ENCODE measurements at regions of chr10 and their contacts with region 1.

Region 1: DNA sequence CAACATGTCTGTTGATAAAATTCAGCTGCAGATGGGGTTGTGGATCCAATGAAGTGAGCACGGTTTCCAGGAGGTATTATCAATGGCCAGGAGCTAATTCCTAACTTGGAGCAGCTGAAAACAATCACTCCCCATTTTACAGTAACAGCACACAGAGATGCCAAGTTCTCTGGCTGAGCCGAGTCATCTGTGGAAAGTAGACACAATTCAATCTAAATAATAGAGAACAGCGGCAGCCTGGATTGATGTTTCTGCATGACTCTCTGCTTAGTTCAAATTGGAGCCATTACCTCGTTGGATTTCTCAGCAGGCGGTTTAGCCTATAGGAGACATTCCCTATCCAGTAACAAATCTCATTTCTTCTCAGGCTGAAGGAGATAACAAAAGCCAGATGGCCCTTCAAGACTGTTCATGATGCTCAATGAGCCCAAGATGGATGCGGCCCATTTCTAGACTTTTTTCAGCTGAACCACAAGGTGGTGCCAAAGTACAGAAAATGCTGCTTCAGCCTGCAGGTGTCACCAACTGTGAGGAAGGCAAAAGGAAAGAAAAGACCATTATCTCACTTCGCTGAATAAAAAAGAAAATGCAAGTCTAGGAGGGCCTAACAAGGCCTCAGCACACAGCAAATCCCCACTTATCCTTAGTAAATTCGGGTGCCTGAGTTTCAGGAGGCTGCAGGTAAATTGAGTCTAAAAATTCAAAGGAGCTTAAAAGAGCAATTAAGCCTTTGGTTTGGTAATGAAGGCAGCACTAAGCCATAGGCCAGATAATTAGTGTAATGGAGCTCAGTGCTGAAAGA is 83.7 kb downstream of the SLC16A9 start:
- DNase-seq: no peak
- ATAC-seq: peak; percentile 84

Region 2: GRCh38 chr10:58781873-58782488 is 843.9 kb before region 1 on chr10:
- intact Hi-C with region 1: loop called (anchors 5 kb)
- DNase-seq: no peak
- ATAC-seq: peak; percentile 58

Region 3: GRCh38 chr10:59240582-59241183 is 385.2 kb before region 1 on chr10:
- intact Hi-C with region 1: loop called (anchors 5 kb)
- DNase-seq: no peak
- ATAC-seq: peak; percentile 38

Region 4: DNA sequence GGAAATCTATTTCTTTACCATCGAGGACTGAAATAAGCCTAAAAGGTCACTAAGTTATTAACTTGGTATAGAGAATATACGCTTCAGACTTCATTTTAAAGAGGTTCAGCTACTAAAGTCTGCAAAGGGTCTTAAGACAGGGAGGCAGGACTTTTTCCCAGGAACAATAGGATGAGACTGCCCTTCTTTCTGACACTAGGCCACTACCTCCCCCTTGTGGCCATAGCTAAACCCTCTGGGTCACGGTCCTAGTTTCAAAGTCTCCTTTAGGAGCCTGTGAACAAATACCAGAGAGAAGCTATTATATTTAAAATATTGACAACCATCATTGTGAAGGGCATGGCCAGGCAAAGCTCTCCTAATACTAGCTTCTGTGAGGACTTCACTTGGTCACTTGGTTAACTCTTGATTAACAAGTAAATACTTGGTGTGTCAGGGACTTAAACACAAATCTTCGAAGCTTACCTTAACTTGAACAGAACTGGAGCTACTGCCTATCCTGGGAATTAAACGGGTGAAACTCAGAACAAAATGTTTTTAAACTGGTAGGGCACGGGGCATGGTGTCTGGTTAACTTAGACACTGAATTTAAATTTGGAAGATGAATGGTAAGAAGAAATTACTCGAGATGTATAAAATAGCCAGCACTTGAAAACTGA is 204.8 kb after region 1 on chr10:
- intact Hi-C with region 1: loop called (anchors 2 kb)
- DNase-seq: no peak
- ATAC-seq: peak; percentile 74

Region 5: DNA sequence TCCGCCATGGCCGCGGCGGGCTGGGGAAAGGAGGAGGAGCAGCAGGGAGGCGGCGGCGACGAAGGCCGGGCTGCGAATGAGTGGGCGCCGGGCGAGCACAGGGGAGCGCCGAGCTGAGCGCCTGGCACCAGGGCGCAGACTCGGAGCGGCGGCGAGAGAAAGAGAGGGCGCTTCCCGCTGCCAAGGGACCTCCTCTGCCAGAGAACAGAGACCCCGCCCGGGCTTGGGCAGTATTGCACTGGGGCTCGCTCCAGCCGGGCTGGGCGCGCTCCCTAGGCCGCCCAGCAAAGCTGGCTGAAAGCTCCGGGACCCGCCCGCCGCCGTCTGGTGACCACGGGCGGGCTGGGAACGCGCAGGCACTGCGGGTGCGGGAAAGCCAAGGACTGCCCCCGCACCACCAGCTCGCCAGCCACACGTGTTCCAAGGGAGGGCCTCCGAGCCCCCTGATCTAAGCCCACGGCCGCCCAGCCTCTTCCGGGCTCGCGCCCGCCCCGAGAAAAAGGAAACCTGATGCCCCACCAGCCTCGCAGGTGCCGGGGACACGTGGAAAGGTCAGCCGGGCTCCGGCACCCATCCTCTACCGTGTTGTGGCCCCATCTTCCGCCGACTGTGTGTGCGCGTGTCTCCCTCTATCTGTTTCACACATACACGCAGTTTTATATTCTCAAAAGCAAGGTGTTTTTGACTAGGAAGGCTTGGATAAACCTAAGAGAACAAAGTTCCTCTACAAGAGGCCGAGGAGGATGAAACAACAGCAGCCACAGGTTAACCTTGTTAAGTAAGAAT is 280.7 kb after region 1 on chr10 and contains the start of gene CCDC6:
- intact Hi-C with region 1: loop called (anchors 5 kb)
- DNase-seq: peak; percentile 96
- ATAC-seq: peak; percentile 95
- total RNA-seq, gene CCDC6: 15.0 TPM

Region 6: DNA sequence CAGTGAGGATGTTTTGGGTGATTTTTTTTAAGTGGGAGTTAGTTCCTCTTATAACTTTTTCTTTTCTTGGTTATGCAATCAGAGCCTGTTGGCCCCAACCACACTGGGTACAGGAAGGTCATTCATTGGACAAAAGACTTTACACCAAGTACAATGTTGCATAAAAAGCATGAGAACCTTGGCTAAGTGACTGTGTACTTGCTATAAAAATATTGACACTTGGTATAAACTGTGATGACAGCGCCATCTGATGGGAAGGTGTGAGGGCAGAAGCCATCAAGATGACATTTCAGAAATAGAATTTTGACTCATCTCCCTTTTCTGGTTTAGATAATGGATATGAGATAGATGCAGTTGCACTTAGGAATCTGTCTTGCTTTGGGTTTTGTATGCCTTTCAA is 406.8 kb after region 1 on chr10:
- intact Hi-C with region 1: loop called (anchors 5 kb)
- DNase-seq: no peak
- ATAC-seq: peak; percentile 91